HEK293T (cell line): ENCODE measurements at regions of chr4 and their contacts with region 1.

Region 1: GRCh38 chr4:184649026-184649970 is at the starts of genes CASP3 and PRIMPOL:
- DNase-seq: peak; percentile 75

Region 2: DNA sequence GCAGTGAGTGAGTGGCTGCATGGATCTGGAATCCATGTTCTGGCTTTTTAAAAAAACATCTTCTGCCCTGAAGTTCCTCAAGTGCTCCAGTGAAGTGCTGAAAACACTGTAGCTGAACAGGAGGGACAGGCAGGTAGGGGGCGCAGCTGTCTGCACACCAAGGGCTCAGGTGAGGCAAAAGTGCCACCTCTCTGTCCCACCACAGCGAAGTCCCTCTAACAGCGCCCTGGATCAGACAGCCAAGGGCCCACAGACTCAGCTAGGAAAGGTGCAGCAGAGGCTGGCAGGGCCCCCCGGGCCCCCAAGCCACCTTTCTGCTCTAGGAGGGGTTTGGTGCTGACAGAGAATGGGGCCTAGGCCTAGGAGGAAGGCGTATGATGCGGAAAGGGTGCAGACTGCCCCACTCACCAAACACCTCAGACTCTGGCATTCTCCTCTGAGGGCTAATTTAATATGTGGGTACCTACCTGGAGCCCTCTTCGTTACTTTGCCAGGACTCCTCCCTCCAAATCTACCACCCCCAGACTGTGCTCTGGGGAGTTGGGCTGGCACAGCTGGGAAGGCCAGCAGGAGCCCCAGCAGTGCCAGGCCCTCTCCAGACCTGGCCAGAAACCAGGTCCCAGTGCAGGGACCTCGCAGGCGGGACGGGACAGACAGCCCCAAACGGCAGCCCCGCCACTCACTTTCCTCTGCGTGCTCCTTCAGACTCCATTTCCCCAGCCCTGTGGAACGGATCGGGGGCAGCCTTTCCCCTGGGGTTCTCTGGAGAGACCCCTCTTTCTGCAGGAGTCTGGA is 505.3 kb before region 1 on chr4:
- CTCF ChIA-PET with region 1: no interaction called
- POLR2A ChIA-PET with region 1: no interaction called
- DNase-seq: no peak

Region 3: DNA sequence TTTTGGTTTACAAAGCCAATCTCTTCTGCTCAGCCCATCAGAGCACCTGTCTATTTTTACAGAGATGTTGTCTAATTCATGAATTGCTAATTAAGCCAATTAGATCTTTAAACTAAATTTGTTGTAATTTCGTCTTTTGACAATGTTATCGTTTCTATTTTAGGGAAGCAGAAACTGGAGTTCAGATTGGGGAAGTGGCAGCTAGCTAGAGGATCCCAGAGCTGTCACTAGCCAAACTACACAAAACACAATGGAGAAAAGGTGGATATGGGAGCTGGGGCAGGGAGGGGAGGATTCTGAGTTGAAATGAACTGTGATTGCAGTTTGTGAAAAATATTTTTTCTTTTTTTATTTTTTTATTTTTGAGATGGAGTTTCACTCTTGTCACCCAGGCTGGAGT is 35.9 kb before region 1 on chr4:
- CTCF ChIA-PET with region 1: interaction called, 4 read pairs
- POLR2A ChIA-PET with region 1: interaction called, 13 read pairs
- DNase-seq: no peak

Region 4: GRCh38 chr4:184635381-184635780 is 13.9 kb before region 1 on chr4:
- CTCF ChIA-PET with region 1: no interaction called
- POLR2A ChIA-PET with region 1: interaction called, 10 read pairs
- DNase-seq: no peak